ENCODE measurements at regions of chr1 and their contacts with region 1.

Region 1: DNA sequence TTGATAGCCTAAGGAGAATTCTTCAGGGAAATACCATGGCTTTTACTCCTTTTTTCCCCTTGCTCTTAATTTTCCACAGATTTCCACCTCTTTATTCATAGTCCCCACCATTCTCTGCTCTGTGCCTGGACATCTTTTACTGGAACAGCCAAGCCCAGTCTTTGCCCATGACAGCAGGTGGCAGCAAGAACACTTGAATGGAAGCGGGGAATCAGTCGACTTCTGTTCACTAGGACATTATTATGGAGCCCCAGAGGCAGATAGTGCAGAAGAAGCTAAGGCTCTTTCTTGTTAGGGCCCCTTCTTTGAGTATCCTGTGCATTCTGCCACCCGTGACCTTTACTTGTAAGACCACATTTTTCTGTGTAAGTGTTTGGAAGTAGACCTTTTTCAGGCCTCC is 6.3 kb downstream of the OR14I1 start:
- DNase-seq: no peak
- H3K4me3 ChIP-seq: no peak overlapping the region
- H3K27ac ChIP-seq: no peak overlapping the region
- H3K4me1 ChIP-seq: no peaks in the 10 kb centered on the region
- H3K27me3 ChIP-seq: no peaks in the 10 kb centered on the region
- CTCF ChIP-seq: no peak
- POLR2A ChIP-seq: no peak

Region 2: GRCh38 chr1:248627971-248628844 is 68.1 kb before region 1 on chr1:
- intact Hi-C with region 1: loop called (anchors 5 kb)
- DNase-seq: no peak
- H3K4me3 ChIP-seq: no peak overlapping the region
- H3K27ac ChIP-seq: no peak overlapping the region
- H3K4me1 ChIP-seq: no peaks in the 10 kb centered on the region
- H3K27me3 ChIP-seq: no peaks in the 10 kb centered on the region
- CTCF ChIP-seq: no peak
- POLR2A ChIP-seq: no peak

Region 3: DNA sequence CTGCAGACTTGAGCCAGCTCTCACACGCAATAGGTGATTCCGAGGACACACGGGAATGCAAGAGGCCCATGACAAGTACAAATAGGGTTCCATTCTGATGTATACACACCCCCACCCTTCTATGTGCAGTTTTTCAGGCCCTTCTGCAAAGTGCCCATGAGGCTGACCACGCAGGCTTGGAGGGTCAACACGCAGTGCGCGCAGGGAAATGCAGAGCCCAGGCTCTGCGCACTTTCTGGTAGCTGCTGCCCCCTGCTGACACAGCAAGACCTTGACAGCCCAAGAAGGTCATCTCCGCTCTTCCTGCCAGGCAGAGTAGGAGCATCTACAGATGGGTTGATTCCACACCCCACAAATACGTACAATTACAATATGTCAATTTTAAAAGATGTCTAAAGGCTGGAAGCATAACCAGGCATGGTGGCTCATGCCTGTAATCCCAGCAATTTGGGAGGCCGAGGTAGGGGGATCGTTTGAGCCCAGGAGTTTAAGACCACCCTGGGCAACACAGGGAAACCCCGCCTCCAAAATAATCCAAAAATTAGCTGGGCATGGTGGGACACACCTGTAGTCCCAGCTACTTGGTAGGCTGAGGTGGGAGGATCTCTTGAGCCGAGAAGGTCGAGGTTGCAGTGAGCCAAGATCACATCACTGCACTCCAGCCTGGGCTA is 110.9 kb after region 1 on chr1:
- intact Hi-C with region 1: loop called (anchors 5 kb)
- DNase-seq: no peak
- H3K4me3 ChIP-seq: no peak overlapping the region
- H3K27ac ChIP-seq: no peak overlapping the region
- H3K4me1 ChIP-seq: no peaks in the 10 kb centered on the region
- H3K27me3 ChIP-seq: no peaks in the 10 kb centered on the region
- CTCF ChIP-seq: peak; percentile 51 to 87 (median 64)
- POLR2A ChIP-seq: no peak

Measured in prostate gland (tissue), 2 donors.